ENCODE measurements at regions of chr9 and their contacts with region 1.

Region 1: GRCh38 chr9:97853844-97854695 is 1.0 kb downstream of the FOXE1 start:
- DNase-seq: peak; percentile 61
- H3K4me3 Mint-ChIP-seq: peak overlapping the region; percentile 86
- H3K27ac Mint-ChIP-seq: no peak overlapping the region
- H3K4me1 Mint-ChIP-seq: peaks cover 16% of the 10 kb centered on the region
- H3K27me3 Mint-ChIP-seq: peaks cover 78% of the 10 kb centered on the region

Region 2: DNA sequence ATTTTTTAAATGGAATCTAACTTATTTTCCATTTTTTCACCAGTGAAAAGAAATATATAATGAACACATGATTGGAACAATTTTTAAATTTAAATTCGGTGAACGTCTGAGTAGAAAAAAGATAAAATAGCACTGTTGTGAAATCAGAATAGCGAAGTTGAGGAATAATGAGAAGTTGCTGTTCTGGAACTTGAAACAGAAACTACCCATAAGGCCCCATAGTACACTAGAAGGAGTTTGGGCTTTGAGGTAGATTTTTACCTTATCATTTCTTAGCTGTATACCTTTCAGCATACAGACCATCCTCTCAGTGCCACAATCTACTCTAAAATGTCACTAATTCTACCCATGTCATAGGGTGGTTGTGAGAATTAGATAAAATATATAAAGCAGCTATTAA is 407.1 kb before region 1 on chr9:
- intact Hi-C with region 1: no loop called
- DNase-seq: no peak
- H3K4me3 Mint-ChIP-seq: no peak overlapping the region
- H3K27ac Mint-ChIP-seq: no peak overlapping the region
- H3K4me1 Mint-ChIP-seq: no peaks in the 10 kb centered on the region
- H3K27me3 Mint-ChIP-seq: no peaks in the 10 kb centered on the region

Region 3: GRCh38 chr9:97501177-97501971 is 352.7 kb before region 1 on chr9 and contains the start of gene TMOD1:
- intact Hi-C with region 1: loop called (anchors 5 kb)
- DNase-seq: no peak
- H3K4me3 Mint-ChIP-seq: peak within 1 kb of the TSS; percentile 73
- H3K27ac Mint-ChIP-seq: no peak within 1 kb of the TSS
- H3K4me1 Mint-ChIP-seq: peaks cover 13% of the 10 kb centered on the region
- H3K27me3 Mint-ChIP-seq: peaks cover 48% of the 10 kb centered on the region
- total RNA-seq, gene TMOD1: 0.96 and 0.97 TPM in 2 replicates

Region 4: DNA sequence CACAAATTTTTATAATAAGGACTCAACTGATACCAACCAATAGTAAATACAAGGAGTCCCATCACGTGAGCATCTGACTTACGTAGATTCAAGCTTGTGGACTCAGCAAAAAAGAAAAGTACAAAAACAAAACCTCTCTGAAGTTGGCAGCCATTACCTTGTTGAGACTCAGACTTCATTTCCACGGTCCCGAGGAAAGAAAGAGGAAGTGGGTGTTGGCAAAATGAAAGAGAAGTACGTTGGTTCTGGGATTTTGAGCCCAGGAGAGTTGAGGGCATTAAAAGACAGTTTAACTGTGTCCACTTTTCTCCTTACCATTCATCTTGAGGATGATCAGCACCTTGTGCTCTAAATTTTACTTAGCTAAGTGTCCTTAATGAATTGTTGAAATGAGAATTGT is 193.7 kb before region 1 on chr9:
- intact Hi-C with region 1: no loop called
- DNase-seq: no peak
- H3K4me3 Mint-ChIP-seq: no peak overlapping the region
- H3K27ac Mint-ChIP-seq: no peak overlapping the region
- H3K4me1 Mint-ChIP-seq: peaks cover 7% of the 10 kb centered on the region
- H3K27me3 Mint-ChIP-seq: no peaks in the 10 kb centered on the region

Region 5: GRCh38 chr9:97906236-97906831 is 52.3 kb after region 1 on chr9:
- intact Hi-C with region 1: loop called (anchors 5 kb)
- DNase-seq: no peak
- H3K4me3 Mint-ChIP-seq: peak overlapping the region; percentile 69
- H3K27ac Mint-ChIP-seq: peak overlapping the region; percentile 96
- H3K4me1 Mint-ChIP-seq: peaks cover 56% of the 10 kb centered on the region
- H3K27me3 Mint-ChIP-seq: no peaks in the 10 kb centered on the region